ENCODE measurements at regions of chr2 and their contacts with region 1.

Region 1: GRCh38 chr2:134453476-134453875 is 199.6 kb downstream of the MGAT5 start:
- DNase-seq: no peak
- ATAC-seq: no peak
- H3K4me3 Mint-ChIP-seq: no peak overlapping the region
- H3K27ac Mint-ChIP-seq: no peak overlapping the region
- H3K4me1 Mint-ChIP-seq: no peaks in the 10 kb centered on the region
- H3K27me3 Mint-ChIP-seq: no peaks in the 10 kb centered on the region

Region 2: GRCh38 chr2:134436706-134437105 is 16.8 kb before region 1 on chr2:
- CTCF ChIA-PET with region 1: interaction called, 15 read pairs
- POLR2A ChIA-PET with region 1: no interaction called
- DNase-seq: no peak
- ATAC-seq: no peak
- H3K4me3 Mint-ChIP-seq: no peak overlapping the region
- H3K27ac Mint-ChIP-seq: no peak overlapping the region
- H3K4me1 Mint-ChIP-seq: no peaks in the 10 kb centered on the region
- H3K27me3 Mint-ChIP-seq: no peaks in the 10 kb centered on the region